Mammary epithelial cell (primary cell): ENCODE measurements at regions of chr7 and their contacts with region 1.

Region 1: DNA sequence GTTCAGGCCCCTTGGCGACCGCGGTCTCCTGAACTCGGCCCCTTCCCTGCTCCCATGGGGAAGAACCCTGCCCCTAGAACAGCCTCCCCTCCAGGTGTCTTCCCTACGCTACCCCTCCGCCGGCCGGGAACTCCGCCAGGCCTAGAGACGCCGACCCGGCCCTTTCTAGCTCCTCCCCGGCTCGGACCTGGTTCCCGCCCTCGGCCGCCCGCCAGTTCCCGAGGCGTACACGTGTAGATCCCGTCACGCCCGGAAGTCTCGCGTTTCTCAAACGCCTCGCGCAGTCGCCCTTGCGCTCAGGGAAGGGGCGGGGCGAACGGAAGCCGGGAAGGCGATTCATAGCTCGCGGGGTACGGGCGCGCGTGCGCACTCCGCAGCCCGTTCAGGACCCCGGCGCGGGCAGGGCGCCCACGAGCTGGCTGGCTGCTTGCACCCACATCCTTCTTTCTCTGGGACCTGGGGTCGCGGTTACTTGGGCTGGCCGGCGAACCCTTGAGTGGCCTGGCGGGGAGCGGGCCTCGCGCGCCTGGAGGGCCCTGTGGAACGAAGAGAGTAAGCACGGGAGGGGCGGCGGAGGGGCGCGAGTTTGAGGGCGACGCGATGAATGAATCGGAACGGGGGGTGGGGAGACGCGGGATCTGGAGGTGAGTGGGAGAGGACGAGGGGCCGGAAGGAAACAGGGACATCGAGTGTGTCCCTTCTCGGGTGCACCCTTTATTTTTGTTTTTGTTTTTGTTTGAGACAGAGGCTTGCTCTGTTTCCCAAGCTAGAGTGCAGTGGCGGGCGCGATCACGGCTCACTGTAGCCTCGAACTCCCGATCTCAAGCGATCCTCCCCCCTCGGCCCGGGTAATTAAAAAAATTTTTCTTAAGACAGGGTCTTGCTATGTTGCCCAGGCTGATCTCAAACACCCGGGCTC is at the start of gene POP7:
- DNase-seq: peak; percentile 97
- H3K4me3 ChIP-seq: peak within 1 kb of the TSS; percentile 84 to 98 (median 90)
- H3K27ac ChIP-seq: peak within 1 kb of the TSS; percentile 72
- H3K4me1 ChIP-seq: peaks cover 12% of the 10 kb centered on the region
- H3K27me3 ChIP-seq: no peaks in the 10 kb centered on the region
- CTCF ChIP-seq: no peak
- total RNA-seq, gene POP7: 29.2 to 52.2 TPM

Region 2: DNA sequence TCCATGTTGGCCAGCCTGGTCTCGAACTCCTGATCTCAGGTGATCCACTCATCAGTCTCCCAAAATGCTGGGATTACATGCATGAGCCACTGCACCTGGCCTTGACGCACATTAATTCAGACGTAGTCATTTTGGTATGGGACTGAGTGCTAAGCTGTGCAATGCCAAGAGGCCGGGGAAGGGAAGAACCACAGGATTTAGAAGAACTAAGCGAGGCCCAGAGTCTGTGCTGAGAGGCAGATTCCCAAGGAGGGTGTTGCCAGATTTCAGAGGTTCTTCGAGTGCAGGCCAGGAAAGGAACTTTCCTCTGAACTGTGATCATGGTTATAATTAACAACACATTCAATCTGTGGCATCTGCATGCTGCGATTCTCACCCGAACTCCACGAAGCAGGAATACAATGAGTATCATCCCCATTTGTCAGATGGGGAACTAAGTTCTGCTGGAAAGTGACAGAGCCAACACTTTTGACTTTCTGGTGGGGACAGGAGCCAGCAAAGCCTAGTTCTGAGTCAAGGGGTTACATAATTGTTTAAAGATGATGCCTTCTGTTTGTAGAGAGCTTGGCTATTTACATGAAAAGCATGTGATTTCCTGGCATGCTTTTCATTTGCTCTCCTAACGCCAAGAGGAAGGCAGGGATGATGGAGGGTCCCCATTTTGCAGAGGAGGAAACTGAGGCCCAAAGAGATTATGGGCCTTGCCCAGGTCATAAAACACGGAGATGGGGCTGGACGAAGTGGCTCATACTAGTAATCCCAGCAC is 21.2 kb after region 1 on chr7:
- CTCF ChIA-PET with region 1: no interaction called
- dilution Hi-C with region 1: no loop called
- in situ Hi-C with region 1: no loop called
- intact Hi-C with region 1: loop called (anchors 2 kb)
- DNase-seq: no peak
- H3K4me3 ChIP-seq: no peak overlapping the region
- H3K27ac ChIP-seq: no peak overlapping the region
- H3K4me1 ChIP-seq: peaks cover 9% of the 10 kb centered on the region
- H3K27me3 ChIP-seq: peaks cover 1% of the 10 kb centered on the region
- CTCF ChIP-seq: no peak

Region 3: DNA sequence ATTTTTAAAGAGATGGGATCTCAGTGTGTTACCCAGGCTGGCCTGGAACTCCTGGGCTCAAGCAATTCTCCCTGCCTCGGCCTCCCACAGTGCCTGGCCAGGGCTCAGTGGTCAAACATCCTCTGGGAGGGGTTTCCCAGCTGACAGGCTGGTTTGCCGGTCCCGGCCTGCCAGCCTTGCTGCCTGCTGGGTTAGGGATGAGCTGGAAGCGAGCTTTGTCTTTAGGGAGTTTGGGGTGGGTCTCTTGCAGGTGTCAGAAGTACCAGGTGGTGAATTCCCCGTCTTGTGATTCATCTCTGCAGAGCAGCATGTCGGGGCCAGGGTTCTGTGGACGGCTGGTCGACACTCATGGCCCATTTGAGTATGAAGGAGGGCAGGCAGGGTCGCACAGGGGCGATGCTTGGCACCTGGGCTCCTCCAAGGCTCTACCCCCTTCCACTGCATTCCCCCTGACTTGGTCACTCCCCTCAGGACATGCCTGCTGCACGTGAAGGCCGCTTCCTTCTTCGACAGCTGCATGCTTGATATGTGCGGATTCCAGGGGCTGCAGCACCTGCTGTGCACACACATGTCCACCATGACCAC is 57.6 kb after region 1 on chr7:
- CTCF ChIA-PET with region 1: no interaction called
- dilution Hi-C with region 1: no loop called
- in situ Hi-C with region 1: no loop called
- intact Hi-C with region 1: no loop called
- DNase-seq: peak; percentile 41
- H3K4me3 ChIP-seq: no peak overlapping the region
- H3K27ac ChIP-seq: no peak overlapping the region
- H3K4me1 ChIP-seq: no peaks in the 10 kb centered on the region
- H3K27me3 ChIP-seq: no peaks in the 10 kb centered on the region
- CTCF ChIP-seq: no peak

Region 4: DNA sequence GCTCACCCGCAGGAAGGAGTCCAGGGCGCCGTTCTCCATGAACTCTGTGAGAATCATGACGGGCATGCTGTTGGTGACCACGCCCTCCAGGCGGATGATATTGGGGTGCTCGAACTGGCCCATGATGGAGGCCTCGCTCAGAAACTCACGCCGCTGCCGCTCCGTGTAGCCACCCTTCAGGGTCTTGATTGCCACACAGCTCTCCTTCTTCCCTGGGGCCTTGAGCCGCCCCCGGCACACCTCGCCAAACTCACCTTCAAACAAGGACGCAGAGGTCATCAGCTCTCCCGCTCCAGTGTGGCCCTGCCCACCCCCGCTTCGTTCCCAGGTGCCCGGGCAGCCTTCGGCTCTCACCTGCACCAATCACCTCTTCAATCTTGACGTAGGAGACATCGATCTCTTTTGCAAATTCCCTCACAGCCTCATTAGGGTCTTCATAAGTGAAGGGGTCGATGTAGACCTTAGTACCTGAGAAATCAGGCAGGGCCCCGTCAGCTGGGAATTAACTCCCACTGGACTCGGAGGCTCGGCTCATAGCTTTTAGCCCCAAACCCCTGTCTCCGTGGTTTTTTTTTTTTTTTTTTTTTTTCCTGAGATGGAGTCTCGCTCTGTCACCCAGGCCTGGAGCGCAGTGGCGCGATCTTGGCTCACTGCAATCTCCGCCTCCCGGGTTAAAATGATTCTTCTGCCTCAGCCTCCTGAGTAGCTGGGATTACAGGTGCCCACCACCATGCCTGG is 106.9 kb after region 1 on chr7:
- CTCF ChIA-PET with region 1: no interaction called
- dilution Hi-C with region 1: no loop called
- in situ Hi-C with region 1: no loop called
- intact Hi-C with region 1: no loop called
- DNase-seq: no peak
- H3K4me3 ChIP-seq: no peak overlapping the region
- H3K27ac ChIP-seq: no peak overlapping the region
- H3K4me1 ChIP-seq: peaks cover 7% of the 10 kb centered on the region
- H3K27me3 ChIP-seq: no peaks in the 10 kb centered on the region
- CTCF ChIP-seq: no peak

Region 5: DNA sequence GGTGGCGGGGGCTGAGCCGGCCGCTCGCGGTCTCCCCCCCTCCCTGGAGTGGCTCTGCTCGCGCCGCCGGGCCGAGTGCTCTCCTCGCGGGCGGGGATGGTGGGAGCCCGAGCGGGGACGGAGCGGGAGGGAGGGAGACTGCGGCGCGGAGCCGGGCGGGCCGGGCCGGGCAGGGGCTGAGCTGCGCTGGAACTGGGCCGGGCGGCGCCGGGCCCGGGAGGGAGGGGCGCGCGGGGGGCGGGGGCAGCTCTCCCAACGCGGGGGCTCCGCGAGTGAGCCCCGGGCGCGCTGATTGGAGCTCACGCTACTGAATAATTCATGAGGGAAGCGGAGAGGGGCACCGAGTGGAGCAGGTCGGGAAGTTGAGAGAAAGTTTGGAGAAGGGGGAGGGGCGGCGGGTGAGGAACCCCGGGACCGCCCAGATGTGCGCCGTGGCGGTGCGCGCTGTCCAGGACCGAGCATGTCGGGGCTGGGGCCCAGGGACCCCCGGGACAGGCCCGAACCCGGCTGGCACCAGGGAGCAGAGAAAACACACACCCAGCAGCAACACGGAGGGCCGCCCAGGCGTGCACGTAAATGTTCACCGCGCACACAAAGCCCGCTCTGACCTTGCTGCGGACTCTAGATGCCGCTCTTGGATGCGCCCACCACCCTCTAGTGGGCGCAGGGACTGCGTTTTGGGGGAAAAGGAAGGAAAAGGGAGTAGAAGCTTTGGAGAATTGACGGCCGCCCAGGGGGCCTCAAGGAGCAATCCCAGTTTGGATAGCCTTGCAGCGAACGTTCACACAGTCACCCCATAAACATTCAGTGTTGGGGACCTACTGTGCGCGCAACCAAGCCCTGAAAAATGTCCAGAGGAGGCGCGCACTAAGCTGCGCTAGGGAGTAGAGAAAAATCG is 121.6 kb after region 1 on chr7 and contains the start of gene EPHB4:
- CTCF ChIA-PET with region 1: interaction called, 5 read pairs
- dilution Hi-C with region 1: no loop called
- in situ Hi-C with region 1: no loop called
- intact Hi-C with region 1: loop called (anchors 2 kb)
- DNase-seq: peak; percentile 79
- H3K4me3 ChIP-seq: peak within 1 kb of the TSS; percentile 70 to 86 (median 72)
- H3K27ac ChIP-seq: peak within 1 kb of the TSS; percentile 39
- H3K4me1 ChIP-seq: peaks cover 7% of the 10 kb centered on the region
- H3K27me3 ChIP-seq: no peaks in the 10 kb centered on the region
- CTCF ChIP-seq: no peak
- total RNA-seq, gene EPHB4: 75.0 to 81.0 TPM

Region 6: GRCh38 chr7:100867040-100867775 is 161.2 kb after region 1 on chr7 and contains the start of gene TRIP6:
- CTCF ChIA-PET with region 1: interaction called, 4 read pairs
- dilution Hi-C with region 1: no loop called
- in situ Hi-C with region 1: no loop called
- intact Hi-C with region 1: loop called (anchors 5 kb)
- DNase-seq: peak; percentile 88
- H3K4me3 ChIP-seq: peak within 1 kb of the TSS; percentile 96 to 98 (median 97)
- H3K27ac ChIP-seq: peak within 1 kb of the TSS; percentile 95
- H3K4me1 ChIP-seq: peaks cover 30% of the 10 kb centered on the region
- H3K27me3 ChIP-seq: no peaks in the 10 kb centered on the region
- CTCF ChIP-seq: no peak
- total RNA-seq, gene TRIP6: 56.3 to 129 TPM